Activated T-helper 2 cell treated with anti-CD3 and anti-CD28 coated beads, Interferon-gamma antibody, Interleukin-2, Interleukin-4, amounts not matched to agents 10 μg/mL and 5 μg/mL and 100 μg/mL, durations not matched to agents 14 hours and 24 hours and 36 hours (primary cell): ENCODE measurements at regions of chr7 and their contacts with region 1.

Region 1: DNA sequence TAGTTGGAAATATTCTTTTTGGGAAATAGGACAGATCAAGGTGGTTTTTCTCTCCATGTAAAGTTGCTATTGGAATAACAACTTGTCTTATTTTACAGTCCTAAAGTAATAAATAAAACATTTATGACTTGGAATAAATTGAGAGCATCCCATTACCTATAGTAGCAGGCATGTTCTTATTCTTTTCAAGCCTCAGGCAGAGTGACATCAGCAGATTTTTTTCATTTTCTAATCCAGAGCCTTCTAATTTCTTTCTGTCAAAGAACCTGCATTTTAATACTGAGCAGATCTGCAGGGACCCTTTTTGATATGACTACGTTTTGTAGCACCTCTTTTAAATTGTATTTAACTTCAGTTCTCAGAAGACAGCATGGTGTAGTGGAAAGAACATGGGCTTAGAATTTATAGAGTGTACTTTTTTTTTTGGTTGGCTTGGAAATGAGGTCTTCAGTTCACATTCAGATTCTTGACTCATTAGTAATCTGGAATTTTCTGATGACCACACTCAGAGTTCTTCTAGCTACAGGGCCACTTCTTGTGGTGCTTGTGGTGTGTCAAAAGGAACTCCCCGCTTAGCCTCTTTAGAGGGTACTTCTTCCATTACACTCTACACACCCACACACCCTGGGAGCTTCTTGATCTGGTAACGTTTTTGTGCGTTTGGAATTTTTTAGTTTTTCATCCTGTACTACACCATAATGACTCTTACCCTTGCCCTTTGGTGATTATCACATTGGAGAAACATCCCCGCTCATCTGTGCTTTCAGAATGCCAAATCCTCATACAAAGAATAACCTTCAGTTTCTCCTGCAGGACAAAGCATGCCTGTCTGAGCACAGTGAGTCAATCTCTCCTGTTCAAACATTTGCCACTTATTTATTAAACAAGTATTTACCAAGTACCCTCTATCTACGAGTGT is 34.6 kb downstream of the AGK start:
- DNase-seq: no peak
- H3K4me3 Mint-ChIP-seq: peak overlapping the region; percentile 30
- H3K27ac Mint-ChIP-seq: peak overlapping the region; percentile 87
- H3K4me1 Mint-ChIP-seq: peaks cover 58% of the 10 kb centered on the region
- H3K27me3 Mint-ChIP-seq: no peaks in the 10 kb centered on the region

Region 2: GRCh38 chr7:141511676-141512396 is 74.0 kb before region 1 on chr7:
- intact Hi-C with region 1: no loop called
- DNase-seq: no peak
- H3K4me3 Mint-ChIP-seq: peak overlapping the region; percentile 55
- H3K27ac Mint-ChIP-seq: no peak overlapping the region
- H3K4me1 Mint-ChIP-seq: peaks cover 11% of the 10 kb centered on the region
- H3K27me3 Mint-ChIP-seq: peaks cover 60% of the 10 kb centered on the region

Region 3: DNA sequence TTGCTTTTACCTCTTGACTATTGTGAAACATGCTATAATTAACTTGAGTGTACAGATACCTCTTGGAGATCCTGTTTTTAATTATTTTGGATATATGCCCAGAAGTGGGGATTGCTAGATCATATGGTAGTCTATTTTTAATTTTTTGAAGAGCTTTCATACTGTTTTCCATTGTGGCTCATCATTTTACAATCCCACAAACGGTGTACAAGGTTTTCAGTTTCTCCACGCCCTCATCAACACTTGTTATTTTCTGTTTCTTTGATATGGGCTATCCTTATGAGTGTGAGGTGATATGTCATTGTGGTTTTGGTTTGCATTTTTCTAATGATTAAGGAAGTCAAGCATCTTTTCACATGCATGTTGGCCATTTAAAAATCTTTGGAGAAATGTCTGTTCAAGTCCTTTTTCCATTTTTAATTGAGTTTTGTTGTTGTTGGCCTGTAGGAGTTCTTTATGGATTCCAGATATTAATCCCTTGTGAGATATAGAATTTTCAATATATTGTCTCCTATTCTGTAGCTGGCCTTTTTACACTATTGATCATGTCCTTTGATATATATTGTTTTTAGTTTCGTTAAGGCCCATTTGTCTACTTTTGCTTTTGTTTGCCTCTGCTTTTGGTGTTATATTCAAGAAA is 27.2 kb before region 1 on chr7:
- intact Hi-C with region 1: loop called (anchors 1 kb)
- DNase-seq: peak; percentile 21
- H3K4me3 Mint-ChIP-seq: peak overlapping the region; percentile 35
- H3K27ac Mint-ChIP-seq: peak overlapping the region; percentile 96
- H3K4me1 Mint-ChIP-seq: peaks cover 66% of the 10 kb centered on the region
- H3K27me3 Mint-ChIP-seq: no peaks in the 10 kb centered on the region

Region 4: GRCh38 chr7:141563956-141564631 is 21.8 kb before region 1 on chr7:
- intact Hi-C with region 1: loop called (anchors 1 kb)
- DNase-seq: no peak
- H3K4me3 Mint-ChIP-seq: peak overlapping the region; percentile 9
- H3K27ac Mint-ChIP-seq: peak overlapping the region; percentile 91
- H3K4me1 Mint-ChIP-seq: peaks cover 59% of the 10 kb centered on the region
- H3K27me3 Mint-ChIP-seq: no peaks in the 10 kb centered on the region

Region 5: DNA sequence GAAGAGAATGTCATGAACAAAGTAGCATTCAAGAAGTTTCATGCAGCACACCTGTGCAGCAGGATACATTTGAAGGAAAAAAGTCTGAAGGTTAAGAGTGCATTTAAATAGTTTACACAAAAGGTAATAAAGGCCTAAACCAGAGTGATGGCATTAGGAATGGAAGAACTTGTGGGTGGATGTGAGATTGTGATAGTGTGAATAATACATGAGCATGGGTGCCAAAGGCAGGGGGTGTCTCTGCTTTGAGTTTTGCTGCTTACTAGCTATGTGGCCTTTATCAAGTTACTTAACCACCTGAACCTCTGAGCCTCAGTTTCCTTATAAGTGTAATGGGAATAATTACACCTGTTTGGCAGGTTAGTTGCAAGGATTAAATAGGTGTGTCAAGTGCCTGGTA is 13.7 kb before region 1 on chr7:
- intact Hi-C with region 1: loop called (anchors 1 kb)
- DNase-seq: no peak
- H3K4me3 Mint-ChIP-seq: no peak overlapping the region
- H3K27ac Mint-ChIP-seq: peak overlapping the region; percentile 73
- H3K4me1 Mint-ChIP-seq: peaks cover 21% of the 10 kb centered on the region
- H3K27me3 Mint-ChIP-seq: no peaks in the 10 kb centered on the region